Activated CD4-positive, alpha-beta T cell treated with anti-CD3 and anti-CD28 coated beads, Interleukin-2, amount 10 ng/mL, durations not matched to agents 24 days and 14 days (primary cell): ENCODE measurements at regions of chr1 and their contacts with region 1.

Region 1: GRCh38 chr1:2205191-2205952 is 10.8 kb upstream of the FAAP20 start:
- DNase-seq: peak; percentile 96
- H3K4me3 Mint-ChIP-seq: peak overlapping the region; percentile 65
- H3K27ac Mint-ChIP-seq: peak overlapping the region; percentile 62
- H3K4me1 Mint-ChIP-seq: peaks cover 2% of the 10 kb centered on the region
- H3K27me3 Mint-ChIP-seq: peaks cover 2% of the 10 kb centered on the region

Region 2: DNA sequence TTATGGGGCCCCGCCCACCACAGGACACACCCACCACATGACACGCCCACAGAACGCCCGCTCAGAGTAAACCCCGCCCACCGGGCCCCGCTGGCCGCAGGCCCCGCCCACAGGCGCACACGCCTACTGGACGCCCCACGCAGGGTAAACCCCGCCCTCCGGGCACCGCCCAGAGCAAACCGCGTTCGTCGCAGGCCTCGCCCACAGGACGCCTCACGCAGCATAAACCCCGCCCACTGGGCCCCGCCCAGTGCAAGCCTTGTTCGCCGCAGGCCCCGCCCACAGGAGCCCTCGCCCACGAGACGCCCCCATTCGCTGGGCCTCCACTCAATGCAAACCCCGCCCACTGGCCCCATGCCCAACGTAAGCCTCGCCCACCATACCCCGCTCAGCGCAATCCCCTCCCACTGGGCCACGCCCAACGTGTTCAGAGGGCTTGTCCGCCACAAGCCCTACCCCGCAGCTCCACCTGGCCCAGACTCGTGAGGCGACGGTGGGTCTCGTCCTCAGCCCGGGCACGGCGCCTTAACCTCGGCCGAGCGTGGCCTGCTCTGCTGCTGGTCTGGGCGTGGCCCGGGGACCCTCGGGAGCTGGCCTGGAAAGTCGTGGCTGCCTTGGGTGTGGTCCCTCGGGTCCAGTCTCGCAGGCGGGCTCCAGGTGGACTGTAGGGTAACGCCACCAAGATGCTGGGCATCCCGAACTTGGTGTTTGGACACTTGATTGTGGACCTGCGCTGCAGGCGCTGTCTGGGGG is 285.9 kb before region 1 on chr1:
- intact Hi-C with region 1: loop called (anchors 1 kb)
- DNase-seq: peak; percentile 100
- H3K4me3 Mint-ChIP-seq: peak overlapping the region; percentile 79
- H3K27ac Mint-ChIP-seq: peak overlapping the region; percentile 70
- H3K4me1 Mint-ChIP-seq: peaks cover 3% of the 10 kb centered on the region
- H3K27me3 Mint-ChIP-seq: peaks cover 2% of the 10 kb centered on the region

Region 3: DNA sequence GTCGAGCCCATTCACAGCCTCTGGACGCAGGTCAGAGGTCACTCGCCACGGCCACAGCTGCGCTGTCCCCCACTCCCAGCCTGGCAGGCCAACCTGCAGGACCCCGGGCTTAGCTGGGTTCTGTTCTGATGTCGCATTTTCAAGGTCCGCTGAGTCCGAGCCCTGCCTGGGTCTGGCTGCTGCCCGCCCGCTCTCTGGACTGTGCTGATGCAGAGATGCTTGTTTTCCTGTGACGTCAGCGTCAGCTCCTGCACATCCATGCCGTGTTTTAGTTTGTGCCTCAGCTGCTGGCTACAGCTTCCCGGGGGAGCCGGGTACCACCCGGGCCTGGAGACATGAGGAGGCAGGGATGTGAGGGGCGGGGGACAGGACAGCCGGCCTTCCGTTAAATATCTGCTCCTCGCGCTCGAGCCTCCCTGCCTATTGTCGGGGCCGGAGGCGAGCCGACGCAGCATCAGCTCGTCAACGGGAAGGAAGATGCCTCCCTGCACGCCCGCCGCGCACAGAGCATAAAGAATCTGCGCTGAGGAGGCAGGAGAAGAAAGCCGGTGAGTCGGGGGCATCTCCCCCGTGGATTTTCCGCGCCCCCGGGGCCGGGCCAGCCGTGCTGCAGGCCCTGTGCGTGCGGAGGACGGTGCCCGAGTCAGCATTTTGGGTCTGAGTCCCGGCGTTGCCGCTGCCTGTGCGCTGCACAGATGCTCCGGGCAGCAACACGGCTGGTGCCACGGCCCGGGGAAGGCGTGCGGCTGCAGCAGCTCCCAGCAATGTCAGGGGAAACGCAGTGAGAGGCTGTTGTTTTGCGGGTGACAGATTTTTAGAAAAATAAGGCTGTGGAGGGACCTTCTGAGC is 131.8 kb before region 1 on chr1:
- intact Hi-C with region 1: no loop called
- DNase-seq: no peak
- H3K4me3 Mint-ChIP-seq: no peak overlapping the region
- H3K27ac Mint-ChIP-seq: no peak overlapping the region
- H3K4me1 Mint-ChIP-seq: no peaks in the 10 kb centered on the region
- H3K27me3 Mint-ChIP-seq: no peaks in the 10 kb centered on the region

Region 4: GRCh38 chr1:2215909-2216766 is 10.8 kb after region 1 on chr1:
- intact Hi-C with region 1: no loop called
- DNase-seq: no peak
- H3K4me3 Mint-ChIP-seq: no peak overlapping the region
- H3K27ac Mint-ChIP-seq: no peak overlapping the region
- H3K4me1 Mint-ChIP-seq: peaks cover 5% of the 10 kb centered on the region
- H3K27me3 Mint-ChIP-seq: peaks cover 9% of the 10 kb centered on the region

Region 5: DNA sequence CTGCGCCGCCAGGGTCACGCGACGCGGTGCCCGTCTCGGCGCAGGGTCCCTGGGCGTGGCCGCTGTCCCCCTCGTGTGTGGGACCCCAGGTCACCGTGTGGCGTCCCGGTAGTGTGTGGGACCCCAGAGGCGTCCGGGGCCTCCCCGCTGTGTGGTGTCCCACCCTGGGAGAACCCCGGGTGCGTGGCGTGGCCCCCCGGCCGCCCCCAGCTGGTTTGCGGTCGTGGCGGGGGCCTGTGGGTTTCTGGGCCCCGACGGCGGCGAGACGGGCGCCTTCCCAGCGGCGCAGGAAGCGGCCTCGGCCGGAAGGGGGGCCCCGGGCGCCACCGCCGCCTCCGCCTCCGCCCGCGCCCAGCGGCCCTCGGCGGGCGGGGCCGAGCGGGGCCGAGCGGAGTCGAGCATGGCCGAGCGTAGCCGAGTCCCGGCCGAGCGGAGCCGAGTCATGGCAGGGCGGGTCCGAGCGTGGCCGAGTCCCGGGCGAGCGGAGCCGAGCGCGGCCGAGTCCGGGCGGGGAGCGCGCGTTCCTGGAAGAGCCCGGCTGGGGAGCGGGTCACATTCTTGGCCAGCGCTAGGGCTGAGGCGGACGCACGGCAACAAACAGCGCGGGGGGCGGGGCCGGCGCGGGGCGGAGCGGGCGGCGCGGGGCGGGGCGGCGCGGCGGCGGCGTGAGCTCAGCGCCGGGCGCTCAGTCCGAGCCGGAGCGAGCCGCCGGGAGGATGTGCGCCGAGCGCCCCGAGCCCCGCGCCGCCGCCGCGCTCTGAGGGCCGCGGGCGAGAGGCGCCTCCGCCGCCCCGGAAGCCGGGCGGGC is 22.2 kb after region 1 on chr1:
- intact Hi-C with region 1: loop called (anchors 2 kb)
- DNase-seq: peak; percentile 99
- H3K4me3 Mint-ChIP-seq: peak overlapping the region; percentile 62
- H3K27ac Mint-ChIP-seq: peak overlapping the region; percentile 71
- H3K4me1 Mint-ChIP-seq: peaks cover 24% of the 10 kb centered on the region
- H3K27me3 Mint-ChIP-seq: peaks cover 9% of the 10 kb centered on the region

Region 6: DNA sequence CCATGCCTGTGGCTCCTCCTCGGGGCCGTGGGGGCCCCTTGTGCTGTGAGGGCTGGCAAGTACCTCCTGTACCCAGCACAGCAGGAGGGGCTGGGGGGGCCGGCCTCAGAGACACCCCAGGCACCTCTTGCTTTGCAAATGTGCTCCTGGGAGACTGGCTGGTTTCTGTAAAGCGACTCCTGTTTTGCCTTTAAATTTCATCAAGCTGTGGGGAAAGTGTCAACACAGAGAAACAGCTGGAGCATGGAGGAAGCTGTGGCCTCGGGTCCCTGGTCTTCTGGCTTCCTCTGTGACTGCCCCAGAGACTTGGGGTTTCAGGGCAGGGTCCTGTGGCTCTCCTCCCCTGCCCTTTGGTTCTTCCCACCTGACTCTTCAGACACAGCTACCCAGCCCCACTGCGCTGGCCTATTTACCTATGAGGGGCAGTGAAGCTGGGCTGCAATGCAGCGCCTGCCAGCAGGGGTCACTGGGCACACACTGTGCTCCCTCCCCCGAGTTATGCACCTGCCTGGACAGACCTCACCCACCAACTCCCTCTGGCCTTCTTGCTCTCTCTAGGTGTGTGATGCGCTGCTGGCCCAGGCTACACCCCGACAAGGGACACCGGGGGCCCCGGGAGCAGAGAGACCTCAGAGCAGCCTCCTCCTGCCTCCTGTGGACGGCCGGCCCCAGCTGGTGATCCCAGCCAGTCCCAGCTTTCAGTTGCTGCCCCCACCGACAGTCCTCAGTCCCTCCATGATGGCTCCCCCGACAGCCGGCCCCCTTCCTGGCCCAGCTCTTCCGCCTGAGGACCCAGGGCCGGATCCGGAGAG is 224.6 kb after region 1 on chr1:
- intact Hi-C with region 1: no loop called
- DNase-seq: no peak
- H3K4me3 Mint-ChIP-seq: no peak overlapping the region
- H3K27ac Mint-ChIP-seq: no peak overlapping the region
- H3K4me1 Mint-ChIP-seq: no peaks in the 10 kb centered on the region
- H3K27me3 Mint-ChIP-seq: no peaks in the 10 kb centered on the region